Ascending aorta (tissue), 2 donors: ENCODE measurements at regions of chr6 and their contacts with region 1.

Region 1: DNA sequence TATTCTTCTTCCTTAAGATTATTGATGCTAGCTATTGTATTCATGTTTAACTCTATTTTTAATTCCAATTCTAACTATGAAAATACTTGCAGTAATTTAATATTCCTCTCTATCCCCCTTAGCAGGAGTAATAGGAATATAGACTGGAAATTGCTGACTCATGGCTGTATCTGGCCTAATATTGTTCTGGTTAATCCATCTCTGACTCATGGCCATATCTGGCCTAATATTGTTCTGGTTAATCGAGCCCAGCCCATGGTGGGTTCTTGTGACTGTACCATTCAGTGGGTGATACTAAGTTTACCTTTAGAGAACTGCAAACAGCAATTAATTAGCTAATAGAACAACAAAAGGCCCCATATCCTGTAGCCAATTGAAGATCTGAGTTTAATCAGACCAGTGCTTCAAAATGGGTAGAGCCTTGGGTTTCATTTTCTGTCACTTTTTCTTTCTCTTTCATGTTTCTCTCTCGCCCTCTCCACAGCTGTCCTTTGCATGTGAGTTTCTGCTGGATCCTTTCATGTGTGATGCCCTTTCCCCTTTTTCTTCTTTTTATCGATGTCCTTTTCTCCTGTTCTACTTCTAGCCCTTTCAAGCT is 50.6 kb downstream of the SLC22A3 start:
- DNase-seq: no peak
- H3K4me3 ChIP-seq: no peak overlapping the region
- H3K27ac ChIP-seq: peak overlapping the region; percentile 87 to 94
- H3K4me1 ChIP-seq: peaks cover 3 to 62% of the 10 kb centered on the region in 2 donors
- H3K27me3 ChIP-seq: no peaks in the 10 kb centered on the region
- CTCF ChIP-seq: no peak

Region 2: GRCh38 chr6:160386869-160387530 is 11.8 kb before region 1 on chr6:
- intact Hi-C with region 1: loop called (anchors 2 kb)
- DNase-seq: peak in 1 of 2 donors; percentile 71
- H3K4me3 ChIP-seq: no peak overlapping the region
- H3K27ac ChIP-seq: peak overlapping the region; percentile 60 to 67
- H3K4me1 ChIP-seq: peaks cover 15 to 40% of the 10 kb centered on the region in 2 donors
- H3K27me3 ChIP-seq: no peaks in the 10 kb centered on the region
- CTCF ChIP-seq: peak in 2 of 3 experiments; percentile 13 to 18

Region 3: DNA sequence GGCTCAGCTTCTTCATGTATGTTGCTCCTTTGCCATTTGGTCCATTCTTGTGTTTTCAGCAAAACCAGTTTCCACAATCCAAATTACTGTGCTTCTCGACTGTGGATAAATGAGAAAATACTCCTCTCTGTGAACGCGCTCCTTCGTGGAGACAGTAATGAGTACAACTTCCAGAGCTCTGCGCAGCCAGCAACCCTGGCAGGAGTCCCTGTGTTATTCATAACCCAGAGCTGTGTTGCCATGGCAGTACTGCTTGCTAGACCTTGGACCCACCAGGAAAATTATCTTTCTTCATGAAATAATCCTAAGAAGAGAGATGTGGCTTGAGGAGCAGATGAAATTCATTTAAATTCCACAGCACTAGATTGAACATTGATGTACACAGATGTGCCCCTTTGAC is 23.1 kb after region 1 on chr6:
- intact Hi-C with region 1: loop called (anchors 2 kb)
- DNase-seq: peak in 1 of 2 donors; percentile 87
- H3K4me3 ChIP-seq: peak overlapping the region; percentile 6 to 42
- H3K27ac ChIP-seq: peak overlapping the region; percentile 82 to 85
- H3K4me1 ChIP-seq: peaks cover 0 to 27% of the 10 kb centered on the region in 2 donors
- H3K27me3 ChIP-seq: no peaks in the 10 kb centered on the region
- CTCF ChIP-seq: no peak

Region 4: DNA sequence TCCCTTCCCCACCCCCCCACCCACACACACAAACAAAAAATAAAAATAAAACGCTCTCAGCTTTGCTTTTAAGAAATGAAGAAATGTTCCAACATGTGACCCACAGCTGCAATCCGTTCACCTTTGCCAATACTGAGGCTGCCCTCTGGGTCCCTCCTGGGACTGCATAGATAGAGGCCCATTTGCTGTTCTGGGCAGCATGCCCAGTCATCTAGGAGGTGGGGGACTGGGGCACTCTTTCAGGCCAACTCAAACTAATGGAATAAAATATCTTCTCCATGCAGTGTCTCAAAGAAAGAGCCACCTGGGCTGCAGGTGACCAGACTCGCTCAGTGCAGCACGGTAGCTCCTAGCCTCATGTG is 29.3 kb after region 1 on chr6:
- intact Hi-C with region 1: loop called (anchors 2 kb)
- DNase-seq: peak in 1 of 2 donors; percentile 81
- H3K4me3 ChIP-seq: no peak overlapping the region
- H3K27ac ChIP-seq: peak overlapping the region; percentile 61 to 66
- H3K4me1 ChIP-seq: peaks cover 0 to 45% of the 10 kb centered on the region in 2 donors
- H3K27me3 ChIP-seq: no peaks in the 10 kb centered on the region
- CTCF ChIP-seq: no peak

Region 5: GRCh38 chr6:160489091-160489490 is 90.3 kb after region 1 on chr6:
- intact Hi-C with region 1: no loop called
- DNase-seq: no peak
- H3K4me3 ChIP-seq: no peak overlapping the region
- H3K27ac ChIP-seq: no peak overlapping the region
- H3K4me1 ChIP-seq: no peaks in the 10 kb centered on the region
- H3K27me3 ChIP-seq: no peaks in the 10 kb centered on the region
- CTCF ChIP-seq: no peak